ENCODE measurements at regions of chr20 and their contacts with region 1.

Region 1: DNA sequence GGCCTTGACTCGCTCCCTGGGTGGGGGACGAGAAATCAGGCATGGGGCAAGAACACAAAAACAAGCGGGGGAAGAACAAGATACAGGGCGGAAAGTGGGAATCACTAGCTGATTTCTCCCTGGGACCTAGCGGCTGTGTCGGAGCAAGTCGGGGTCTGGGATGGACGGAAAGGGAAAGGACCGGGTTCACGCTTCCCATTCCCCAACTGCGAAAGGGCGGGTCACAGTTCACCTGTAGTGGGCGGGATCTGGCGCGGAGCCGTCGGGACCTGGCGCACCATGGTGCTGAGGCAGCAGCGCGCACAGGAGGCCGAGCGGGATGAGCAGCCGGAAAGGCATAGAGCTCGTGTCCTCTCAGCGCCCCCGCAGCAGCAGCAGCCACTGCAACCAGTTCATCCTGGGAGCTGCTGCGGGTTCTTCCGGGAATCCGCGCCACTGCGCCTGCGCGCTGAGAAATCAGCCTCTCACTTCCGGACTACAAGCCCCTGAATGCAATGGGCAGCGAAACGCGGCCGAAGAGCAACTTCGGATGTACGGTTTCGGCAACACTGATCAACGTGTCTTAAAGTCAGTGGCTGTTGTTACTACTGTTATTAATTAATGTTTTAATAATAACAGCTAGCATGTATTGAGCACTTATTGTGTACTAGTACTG is at the start of gene EDEM2:
- DNase-seq: peak; percentile 89
- ATAC-seq: peak; percentile 74
- H3K4me3 Mint-ChIP-seq: peak within 1 kb of the TSS; percentile 94
- H3K27ac Mint-ChIP-seq: peak within 1 kb of the TSS; percentile 91
- H3K4me1 Mint-ChIP-seq: peaks cover 48% of the 10 kb centered on the region
- H3K27me3 Mint-ChIP-seq: no peaks in the 10 kb centered on the region
- CTCF ChIP-seq: no peak
- total RNA-seq, gene EDEM2: 23.0 and 24.4 TPM in 2 replicates

Region 2: DNA sequence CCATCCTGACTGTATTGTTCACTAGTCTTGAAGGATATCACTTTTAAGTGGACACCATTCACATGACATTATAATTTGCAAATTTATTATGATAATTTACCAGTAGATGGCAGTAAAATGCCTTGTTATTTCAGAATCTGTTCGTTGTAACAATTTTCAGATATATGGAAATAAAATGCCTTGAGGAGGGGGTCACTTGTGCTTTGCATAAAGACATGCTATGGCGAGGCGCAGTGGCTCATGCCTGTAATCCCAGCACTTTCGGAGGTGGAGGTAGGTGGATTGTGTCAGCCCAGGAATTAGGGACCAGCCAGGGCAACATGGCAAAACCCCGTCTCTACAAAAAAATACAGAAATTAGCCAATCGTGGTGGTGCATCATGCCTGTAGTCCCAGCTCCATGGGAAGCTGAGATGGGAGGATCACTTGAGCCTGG is 312.6 kb before region 1 on chr20:
- CTCF ChIA-PET with region 1: no interaction called
- POLR2A ChIA-PET with region 1: no interaction called
- intact Hi-C with region 1: loop called (anchors 1 kb)
- DNase-seq: no peak
- ATAC-seq: no peak
- H3K4me3 Mint-ChIP-seq: no peak overlapping the region
- H3K27ac Mint-ChIP-seq: no peak overlapping the region
- H3K4me1 Mint-ChIP-seq: peaks cover 2% of the 10 kb centered on the region
- H3K27me3 Mint-ChIP-seq: peaks cover 10% of the 10 kb centered on the region
- CTCF ChIP-seq: no peak

Region 3: GRCh38 chr20:35092524-35093266 is 54.4 kb before region 1 on chr20 and contains the start of gene TRPC4AP:
- CTCF ChIA-PET with region 1: interaction called, 23 read pairs
- POLR2A ChIA-PET with region 1: interaction called, 15 read pairs
- intact Hi-C with region 1: loop called (anchors 1 kb)
- DNase-seq: peak; percentile 87
- ATAC-seq: peak; percentile 97
- H3K4me3 Mint-ChIP-seq: peak within 1 kb of the TSS; percentile 95
- H3K27ac Mint-ChIP-seq: peak within 1 kb of the TSS; percentile 91
- H3K4me1 Mint-ChIP-seq: peaks cover 49% of the 10 kb centered on the region
- H3K27me3 Mint-ChIP-seq: no peaks in the 10 kb centered on the region
- CTCF ChIP-seq: peak; percentile 34
- total RNA-seq, gene TRPC4AP: 58.3 and 60.2 TPM in 2 replicates

Region 4: DNA sequence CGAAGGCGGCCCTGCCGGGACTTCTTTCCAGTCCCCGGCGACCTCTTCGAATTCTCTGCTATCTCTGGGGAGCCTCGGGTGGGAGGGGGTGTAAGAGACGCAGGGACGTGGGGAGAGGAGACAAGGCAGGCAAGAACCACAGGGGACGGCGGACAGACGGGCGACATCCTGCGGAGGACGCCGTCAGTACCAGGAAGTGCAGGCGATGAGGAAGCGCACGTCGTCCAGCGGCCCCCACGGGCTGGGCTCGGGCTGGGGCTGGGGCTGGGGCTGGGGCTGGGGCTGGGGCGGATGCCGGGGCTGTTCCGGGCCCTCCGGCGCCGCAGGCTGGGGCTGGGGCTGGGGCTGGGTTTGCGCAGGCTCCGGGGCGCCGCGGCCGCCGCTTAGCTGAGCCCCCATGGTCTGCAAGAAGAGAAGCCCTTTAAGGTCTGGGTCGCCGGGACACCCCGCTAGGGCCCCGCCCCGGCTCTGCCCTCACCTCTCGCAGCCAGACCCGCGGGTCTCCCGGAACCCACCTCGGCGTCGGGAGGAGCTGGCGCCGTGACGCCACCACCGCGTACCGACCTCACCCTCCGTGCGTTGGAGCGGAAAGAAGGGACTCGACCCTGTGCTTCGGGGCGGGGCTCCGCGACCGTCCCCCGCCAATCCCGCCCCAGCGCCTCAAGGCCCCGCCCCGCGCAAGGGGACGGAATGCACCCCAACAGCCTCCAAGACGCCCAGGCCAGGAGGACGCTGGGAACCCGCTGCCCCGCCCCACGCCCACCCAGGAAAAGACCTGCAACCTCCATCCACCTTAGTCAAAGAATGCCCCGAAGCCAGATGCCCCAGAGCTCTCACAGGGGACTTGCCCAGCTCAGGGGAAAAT is 130.7 kb after region 1 on chr20 and contains the start of gene MMP24OS:
- CTCF ChIA-PET with region 1: no interaction called
- POLR2A ChIA-PET with region 1: interaction called, 13 read pairs
- intact Hi-C with region 1: loop called (anchors 2 kb)
- DNase-seq: peak; percentile 85
- ATAC-seq: peak; percentile 90
- H3K4me3 Mint-ChIP-seq: peak within 1 kb of the TSS; percentile 97
- H3K27ac Mint-ChIP-seq: peak within 1 kb of the TSS; percentile 99
- H3K4me1 Mint-ChIP-seq: peaks cover 31% of the 10 kb centered on the region
- H3K27me3 Mint-ChIP-seq: no peaks in the 10 kb centered on the region
- CTCF ChIP-seq: no peak
- total RNA-seq, gene MMP24OS: 39.2 and 47.9 TPM in 2 replicates

Region 5: DNA sequence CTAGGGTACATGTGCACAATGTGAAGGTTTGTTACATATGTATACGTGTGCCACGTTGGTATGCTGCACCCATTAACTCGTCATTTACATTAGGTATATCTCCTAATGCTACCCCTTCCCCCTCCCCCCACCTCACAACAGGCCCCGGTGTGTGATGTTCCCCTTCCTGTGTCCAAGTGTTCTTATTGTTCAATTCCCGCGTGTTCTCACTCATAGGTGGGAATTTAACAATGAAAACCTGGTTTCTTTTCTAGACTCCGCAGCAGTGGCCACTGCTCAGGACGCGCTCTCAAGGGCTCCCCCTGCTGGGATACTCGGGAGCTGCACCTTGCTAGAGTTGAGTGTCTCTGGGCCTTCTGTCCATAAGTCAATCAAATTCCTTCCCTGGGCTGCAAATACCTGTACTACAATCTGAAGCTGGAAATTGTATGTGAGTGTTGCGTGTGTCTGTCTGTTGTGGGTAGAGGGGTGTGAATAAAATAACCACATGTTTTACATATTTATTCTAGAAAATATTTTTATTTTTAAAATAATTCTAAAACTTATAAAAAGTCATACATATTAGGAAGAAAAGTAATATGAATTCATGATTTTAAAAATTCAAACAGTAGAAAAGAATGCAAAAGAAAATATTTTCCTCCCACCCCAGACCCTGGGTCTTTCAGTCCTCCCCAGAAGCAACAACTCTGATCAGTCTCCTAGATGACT is 300.2 kb after region 1 on chr20:
- CTCF ChIA-PET with region 1: interaction called, 5 read pairs
- POLR2A ChIA-PET with region 1: interaction called, 4 read pairs
- intact Hi-C with region 1: loop called (anchors 2 kb)
- DNase-seq: peak; percentile 83
- ATAC-seq: peak; percentile 100
- H3K4me3 Mint-ChIP-seq: peak overlapping the region; percentile 88
- H3K27ac Mint-ChIP-seq: no peak overlapping the region
- H3K4me1 Mint-ChIP-seq: peaks cover 6% of the 10 kb centered on the region
- H3K27me3 Mint-ChIP-seq: peaks cover 11% of the 10 kb centered on the region
- CTCF ChIP-seq: no peak

Measured in activated B cell treated with CpG ODN at 0.5 μM for 24 hours (primary cell).